Left colon (tissue), 2 donors: ENCODE measurements at regions of chr2 and their contacts with region 1.

Region 1: GRCh38 chr2:39227628-39228412 is 15.9 kb downstream of the CDKL4 start:
- DNase-seq: peak; percentile 57 to 86
- ATAC-seq: peak; percentile 83

Region 2: GRCh38 chr2:38947240-38948239 is 280.3 kb before region 1 on chr2:
- intact Hi-C with region 1: loop called in 1 of 2 experiments (anchors 5 kb)
- DNase-seq: peak; percentile 53 to 80
- ATAC-seq: peak; percentile 88

Region 3: DNA sequence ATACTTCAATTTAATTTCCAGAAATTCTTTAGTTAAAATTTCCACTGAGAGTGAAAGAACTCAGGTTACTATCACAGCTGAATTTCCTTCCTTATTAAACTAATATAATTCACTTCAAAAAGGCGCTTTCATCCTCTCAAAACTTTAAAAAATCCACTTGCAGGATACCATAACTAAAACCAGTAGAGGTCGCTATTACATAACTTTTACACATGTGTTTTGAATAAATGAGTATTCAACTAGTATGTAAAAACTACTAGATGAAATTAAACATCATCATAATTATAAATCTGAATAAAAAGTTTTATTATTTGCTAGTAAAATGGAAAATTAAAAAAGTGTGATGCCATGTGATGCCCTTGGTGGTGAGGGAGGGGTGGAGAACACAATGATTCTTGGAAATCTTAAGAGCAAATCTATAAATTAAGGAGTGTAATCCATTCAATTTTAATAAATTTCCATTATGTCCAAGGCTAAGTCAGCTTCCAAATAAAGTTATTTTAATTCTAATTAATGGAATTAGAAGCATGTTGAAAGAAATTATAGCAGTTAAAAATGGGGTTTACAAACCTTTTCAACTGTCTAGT is 168.4 kb before region 1 on chr2:
- intact Hi-C with region 1: loop called in 1 of 2 experiments (anchors 5 kb)
- DNase-seq: no peak
- ATAC-seq: no peak

Region 4: GRCh38 chr2:39119732-39120520 is 107.9 kb before region 1 on chr2:
- intact Hi-C with region 1: loop called in 1 of 2 experiments (anchors 5 kb)
- DNase-seq: peak; percentile 38 to 72
- ATAC-seq: peak; percentile 45